Right cardiac atrium (tissue), 5 donors: ENCODE measurements at regions of chr1 and their contacts with region 1.

Region 1: DNA sequence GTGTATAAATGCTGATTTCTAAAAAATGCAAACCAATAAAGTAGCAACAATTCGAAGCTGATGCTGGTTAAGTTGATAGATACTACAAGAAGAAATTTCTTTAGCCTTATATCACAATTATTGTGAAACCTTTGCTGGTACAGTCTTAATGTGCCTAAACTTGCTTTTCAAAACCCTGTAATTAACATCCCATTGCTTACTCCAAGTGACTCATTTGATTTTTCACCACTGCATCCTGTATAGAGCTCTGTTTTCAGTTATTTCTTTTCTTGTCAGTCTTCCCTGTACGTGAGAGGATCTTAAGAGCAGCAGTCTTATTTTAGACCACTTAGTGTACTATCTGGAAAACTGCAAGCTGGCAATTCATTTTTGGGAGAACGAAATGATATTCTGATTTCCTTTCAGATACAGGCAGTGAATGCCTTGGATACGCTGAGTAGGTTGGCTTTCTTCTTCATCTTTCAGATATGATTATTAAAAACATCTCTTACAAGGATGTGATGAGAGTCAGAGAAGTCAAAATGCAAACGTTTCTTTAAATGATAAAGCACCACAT is 210.3 kb downstream of the KCTD3 start:
- DNase-seq: no peak
- ATAC-seq: no peak
- H3K4me3 ChIP-seq: no peak overlapping the region
- H3K27ac ChIP-seq: no peak overlapping the region
- H3K4me1 ChIP-seq: no peaks in the 10 kb centered on the region
- H3K27me3 ChIP-seq: no peaks in the 10 kb centered on the region

Region 2: DNA sequence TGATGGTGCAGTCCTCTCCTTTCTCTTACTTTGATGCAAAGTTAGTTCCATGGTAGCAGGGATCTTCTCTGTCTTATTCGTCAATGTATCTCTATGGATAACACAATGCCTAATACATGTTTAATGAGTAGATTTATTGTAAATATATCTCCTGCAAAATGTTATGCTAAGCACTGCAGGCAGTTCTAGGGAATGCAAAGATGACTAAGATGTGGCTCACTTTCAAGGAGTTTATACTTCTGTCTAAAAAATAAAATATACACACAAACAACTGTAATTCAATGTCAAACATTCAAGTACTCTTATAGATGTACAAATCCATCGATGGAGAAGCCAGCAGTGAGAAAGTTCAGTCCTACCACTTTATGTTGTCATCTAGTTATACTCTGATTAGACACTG is 16.0 kb before region 1 on chr1:
- intact Hi-C with region 1: loop called in 1 of 4 experiments (anchors 1 kb)
- DNase-seq: no peak
- ATAC-seq: no peak
- H3K4me3 ChIP-seq: no peak overlapping the region
- H3K27ac ChIP-seq: no peak overlapping the region
- H3K4me1 ChIP-seq: no peaks in the 10 kb centered on the region
- H3K27me3 ChIP-seq: no peaks in the 10 kb centered on the region